CD8-positive, alpha-beta memory T cell (primary cell): ENCODE measurements at regions of chr3 and their contacts with region 1.

Region 1: DNA sequence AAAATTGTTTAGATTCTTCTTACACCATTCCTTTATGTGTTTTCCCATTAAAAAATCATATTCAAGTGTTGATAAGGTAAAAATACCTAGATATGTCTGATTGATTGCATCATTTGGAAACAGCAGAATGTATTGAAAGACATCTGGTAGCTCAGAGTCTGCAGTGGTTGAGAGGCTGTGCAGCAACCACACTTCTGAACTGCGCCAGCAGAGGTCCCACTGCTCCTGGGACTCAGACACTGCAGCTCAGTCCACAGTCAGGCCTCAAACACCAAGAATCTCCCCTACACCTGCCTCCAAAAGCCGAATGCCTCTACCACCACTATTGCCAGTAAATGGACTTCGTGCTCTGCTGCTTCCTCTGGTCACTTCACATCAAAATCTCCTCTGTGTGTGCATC is 176.9 kb upstream of the LMCD1 start:
- DNase-seq: peak; percentile 17 to 61 (median 49)
- H3K4me3 ChIP-seq: no peak overlapping the region
- H3K4me3 Mint-ChIP-seq: no peak overlapping the region
- H3K27ac ChIP-seq: no peak overlapping the region
- H3K27ac Mint-ChIP-seq: peak overlapping the region in 1 of 8 donors; percentile 48
- H3K4me1 ChIP-seq: peaks cover 6% of the 10 kb centered on the region
- H3K4me1 Mint-ChIP-seq: peaks cover 15 to 28% (median 24%) of the 10 kb centered on the region in 3 donors
- H3K27me3 ChIP-seq: no peaks in the 10 kb centered on the region
- H3K27me3 Mint-ChIP-seq: peaks cover 6 to 8% of the 10 kb centered on the region in 2 donors

Region 2: DNA sequence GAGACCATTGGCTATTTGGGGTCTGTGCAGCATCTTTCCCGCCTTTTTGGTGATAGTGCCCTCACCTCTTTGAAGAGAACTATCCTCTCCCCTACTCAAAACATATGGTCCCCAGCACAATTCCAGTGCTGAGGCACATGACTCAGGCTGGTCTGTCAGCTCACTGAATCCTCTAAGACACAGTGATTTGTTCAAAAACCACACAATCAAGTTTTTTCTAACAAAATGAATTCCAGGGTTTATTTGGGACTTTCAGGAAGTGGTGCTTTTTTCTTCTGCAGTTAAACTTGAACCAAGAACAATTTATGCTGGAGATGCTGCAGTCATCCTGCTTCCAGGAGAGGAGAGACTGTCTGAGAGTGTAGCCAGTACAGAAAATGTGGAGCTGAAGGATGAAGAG is 34.4 kb after region 1 on chr3:
- CTCF ChIA-PET with region 1: interaction called, 19 read pairs
- POLR2A ChIA-PET with region 1: interaction called, 3 read pairs
- DNase-seq: no peak
- H3K4me3 ChIP-seq: no peak overlapping the region
- H3K4me3 Mint-ChIP-seq: peak overlapping the region in 2 of 7 donors; percentile 23 to 46
- H3K27ac ChIP-seq: no peak overlapping the region
- H3K27ac Mint-ChIP-seq: peak overlapping the region in 5 of 8 donors; percentile 27 to 88 (median 86)
- H3K4me1 ChIP-seq: peaks cover 46% of the 10 kb centered on the region
- H3K4me1 Mint-ChIP-seq: peaks cover 52 to 61% (median 61%) of the 10 kb centered on the region in 3 donors
- H3K27me3 ChIP-seq: no peaks in the 10 kb centered on the region
- H3K27me3 Mint-ChIP-seq: peaks cover 0 to 1% of the 10 kb centered on the region in 2 donors